CD8-positive, alpha-beta T cell (primary cell): ENCODE measurements at regions of chr13 and their contacts with region 1.

Region 1: DNA sequence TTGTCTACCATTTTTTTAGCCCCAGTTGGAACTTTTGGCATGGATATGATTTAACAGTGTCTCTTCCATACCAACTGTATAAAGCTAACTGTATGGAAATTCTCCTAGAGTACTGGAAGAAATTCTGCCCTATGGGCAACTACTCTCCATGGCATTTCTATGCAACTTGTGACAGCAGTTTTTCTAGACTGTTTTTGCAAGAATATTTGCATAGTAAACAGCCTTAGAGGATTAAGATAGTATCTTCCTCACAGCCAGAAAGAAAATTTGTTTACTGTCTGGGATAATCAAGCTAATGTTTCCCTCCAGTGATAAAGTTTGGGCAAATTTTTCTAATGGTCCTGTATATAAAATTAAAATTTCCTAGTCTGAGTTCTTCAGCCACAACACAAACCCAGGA is 119.9 kb upstream of the PCDH17 start:
- DNase-seq: no peak
- ATAC-seq: no peak
- H3K4me3 ChIP-seq: no peak overlapping the region
- H3K4me3 Mint-ChIP-seq: no peak overlapping the region
- H3K27ac ChIP-seq: no peak overlapping the region
- H3K27ac Mint-ChIP-seq: no peak overlapping the region
- H3K4me1 ChIP-seq: no peaks in the 10 kb centered on the region
- H3K4me1 Mint-ChIP-seq: no peaks in the 10 kb centered on the region
- H3K27me3 ChIP-seq: no peaks in the 10 kb centered on the region
- H3K27me3 Mint-ChIP-seq: no peaks in the 10 kb centered on the region
- CTCF ChIP-seq: no peak

Region 2: GRCh38 chr13:57558051-57558467 is 46.4 kb after region 1 on chr13:
- CTCF ChIA-PET with region 1: no interaction called
- POLR2A ChIA-PET with region 1: no interaction called
- intact Hi-C with region 1: loop called in 1 of 2 experiments (anchors 5 kb)
- DNase-seq: no peak
- ATAC-seq: no peak
- H3K4me3 ChIP-seq: no peak overlapping the region
- H3K4me3 Mint-ChIP-seq: no peak overlapping the region
- H3K27ac ChIP-seq: no peak overlapping the region
- H3K27ac Mint-ChIP-seq: no peak overlapping the region
- H3K4me1 ChIP-seq: no peaks in the 10 kb centered on the region
- H3K4me1 Mint-ChIP-seq: no peaks in the 10 kb centered on the region
- H3K27me3 ChIP-seq: no peaks in the 10 kb centered on the region
- H3K27me3 Mint-ChIP-seq: no peaks in the 10 kb centered on the region
- CTCF ChIP-seq: no peak